Heart right ventricle (tissue), 16 donors: ENCODE measurements at regions of chr17 and their contacts with region 1.

Region 1: DNA sequence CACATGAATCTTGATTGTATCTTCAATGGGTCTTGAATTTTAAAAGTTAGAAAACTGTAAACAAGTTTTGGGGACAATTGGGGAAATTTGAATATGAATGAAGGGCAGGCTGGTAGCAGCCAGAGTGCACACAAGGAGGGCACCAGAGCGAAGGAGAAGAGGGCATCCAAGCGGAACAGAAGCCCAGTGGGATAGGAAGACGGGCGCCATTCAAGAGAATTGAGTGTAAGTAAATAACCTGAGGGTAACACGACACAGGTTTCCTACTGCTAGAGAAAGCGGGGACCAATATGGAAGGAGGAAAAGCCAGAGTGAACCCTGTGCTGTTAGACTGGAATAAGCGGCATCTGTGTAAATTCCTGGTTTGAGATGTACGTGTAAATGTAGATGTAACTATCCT is 115.1 kb upstream of the CCL2 start:
- DNase-seq: no peak
- ATAC-seq: no peak
- H3K4me3 ChIP-seq: no peak overlapping the region
- H3K27ac ChIP-seq: no peak overlapping the region
- H3K4me1 ChIP-seq: no peaks in the 10 kb centered on the region
- H3K27me3 ChIP-seq: peaks cover 0 to 32% (median 11%) of the 10 kb centered on the region in 7 donors
- CTCF ChIP-seq: no peak

Region 2: DNA sequence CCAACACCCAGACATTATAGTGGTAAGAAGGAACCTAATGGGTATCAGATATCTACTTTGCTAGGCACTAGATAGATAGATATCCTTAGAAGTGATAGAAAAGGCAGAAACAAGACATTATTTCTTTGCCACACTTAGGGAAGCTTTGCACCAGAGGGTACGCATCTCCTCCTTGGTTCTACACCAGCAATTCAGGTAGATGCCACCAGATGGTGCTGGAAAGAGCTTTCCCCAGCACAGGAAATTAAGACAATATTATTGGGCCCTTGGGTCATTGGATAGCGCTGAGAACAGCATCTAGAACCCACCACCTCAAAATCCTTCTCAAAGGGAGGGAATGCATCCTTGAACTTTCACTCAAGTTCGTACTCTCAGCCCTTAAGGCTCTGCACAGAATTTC is 58.7 kb before region 1 on chr17:
- intact Hi-C with region 1: loop called in 2 of 10 experiments (anchors 5 kb)
- DNase-seq: no peak
- ATAC-seq: no peak
- H3K4me3 ChIP-seq: no peak overlapping the region
- H3K27ac ChIP-seq: no peak overlapping the region
- H3K4me1 ChIP-seq: no peaks in the 10 kb centered on the region
- H3K27me3 ChIP-seq: peaks cover 0 to 28% (median 14%) of the 10 kb centered on the region in 7 donors
- CTCF ChIP-seq: peak in 6 of 9 donors; percentile 26 to 44 (median 30)

Region 3: DNA sequence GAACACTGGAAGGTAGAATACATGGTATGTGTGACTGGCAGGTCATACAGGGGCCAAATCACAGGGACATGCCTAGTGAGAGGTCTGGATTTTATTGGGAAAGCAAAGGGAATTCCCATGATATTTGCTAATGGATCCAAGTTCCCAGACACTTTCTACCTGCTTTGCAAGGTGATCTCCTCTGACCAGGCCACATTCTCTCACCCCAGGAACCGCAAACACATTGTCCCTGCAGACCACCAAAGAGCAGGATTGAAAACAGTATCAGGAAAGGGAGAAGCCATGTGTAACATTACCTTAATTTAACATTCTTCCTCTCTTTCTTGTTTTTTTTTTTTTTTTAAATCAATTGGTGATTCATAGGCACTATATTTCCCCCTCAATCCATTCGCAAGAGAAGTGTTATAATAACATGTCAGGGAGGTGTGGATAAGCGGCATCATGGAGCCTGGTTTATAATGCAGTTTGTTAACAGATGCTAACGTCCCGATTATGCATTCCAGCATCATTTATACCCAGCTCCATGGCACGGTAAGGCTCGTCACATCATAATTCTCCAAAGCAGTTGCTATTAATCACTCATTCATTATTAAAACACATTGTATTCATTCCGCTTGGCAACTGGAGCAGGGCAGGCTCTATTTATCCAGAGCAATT is 40.0 kb before region 1 on chr17:
- intact Hi-C with region 1: no loop called
- DNase-seq: no peak
- ATAC-seq: no peak
- H3K4me3 ChIP-seq: no peak overlapping the region
- H3K27ac ChIP-seq: no peak overlapping the region
- H3K4me1 ChIP-seq: no peaks in the 10 kb centered on the region
- H3K27me3 ChIP-seq: peaks cover 0 to 18% (median 0%) of the 10 kb centered on the region in 7 donors
- CTCF ChIP-seq: no peak